GM12878 (cell line): ENCODE measurements at regions of chr11 and their contacts with region 1.

Region 1: GRCh38 chr11:73578592-73579185 is 19.2 kb downstream of the FAM168A start:
- DNase-seq: peak; percentile 37
- ATAC-seq: peak; percentile 89
- H3K4me3 ChIP-seq: no peak overlapping the region
- H3K27ac ChIP-seq: peak overlapping the region; percentile 54; the same call in 1 of the 2 replicates
- H3K4me1 ChIP-seq: peaks cover 20% of the 10 kb centered on the region
- H3K27me3 ChIP-seq: no peaks in the 10 kb centered on the region
- CTCF ChIP-seq: no peak
- EP300 ChIP-seq: no peak
- POLR2A ChIP-seq: no peak
- RAD21 ChIP-seq: no peak

Region 2: DNA sequence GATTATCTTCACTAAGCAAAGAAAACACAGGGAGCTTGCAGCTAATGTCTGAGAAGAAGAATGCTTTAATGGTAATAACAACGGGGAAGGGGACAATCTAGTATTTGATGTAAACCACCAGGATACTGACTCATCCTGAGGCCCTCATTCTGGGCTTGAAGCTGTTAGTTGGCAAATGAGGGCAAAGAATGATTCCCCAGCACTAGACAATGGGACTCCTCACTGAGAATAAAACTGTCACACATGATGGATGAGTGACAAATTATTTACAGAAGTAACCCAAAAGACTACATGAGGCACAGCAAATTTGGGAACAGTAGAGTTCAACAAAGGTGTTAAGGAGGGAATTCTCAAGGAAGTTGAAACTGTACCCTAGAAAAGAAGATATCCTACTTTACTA is 57.1 kb before region 1 on chr11:
- CTCF ChIA-PET with region 1: interaction called, 5 read pairs
- POLR2A ChIA-PET with region 1: interaction called, 6 read pairs
- RAD21 ChIA-PET with region 1: interaction called, 20 read pairs
- SMC1A ChIA-PET with region 1: interaction called, 17 read pairs
- in situ Hi-C with region 1: no loop called
- intact Hi-C with region 1: no loop called
- DNase-seq: peak; percentile 53
- ATAC-seq: peak; percentile 84
- H3K4me3 ChIP-seq: no peak overlapping the region
- H3K27ac ChIP-seq: peak overlapping the region; percentile 64
- H3K4me1 ChIP-seq: peaks cover 17% of the 10 kb centered on the region
- H3K27me3 ChIP-seq: no peaks in the 10 kb centered on the region
- CTCF ChIP-seq: no peak
- EP300 ChIP-seq: 0 out of 4 replicates have a peak, but pooled peaks of 1 of the 2 experiments have one; percentile 20
- POLR2A ChIP-seq: no peak
- RAD21 ChIP-seq: no peak

Region 3: DNA sequence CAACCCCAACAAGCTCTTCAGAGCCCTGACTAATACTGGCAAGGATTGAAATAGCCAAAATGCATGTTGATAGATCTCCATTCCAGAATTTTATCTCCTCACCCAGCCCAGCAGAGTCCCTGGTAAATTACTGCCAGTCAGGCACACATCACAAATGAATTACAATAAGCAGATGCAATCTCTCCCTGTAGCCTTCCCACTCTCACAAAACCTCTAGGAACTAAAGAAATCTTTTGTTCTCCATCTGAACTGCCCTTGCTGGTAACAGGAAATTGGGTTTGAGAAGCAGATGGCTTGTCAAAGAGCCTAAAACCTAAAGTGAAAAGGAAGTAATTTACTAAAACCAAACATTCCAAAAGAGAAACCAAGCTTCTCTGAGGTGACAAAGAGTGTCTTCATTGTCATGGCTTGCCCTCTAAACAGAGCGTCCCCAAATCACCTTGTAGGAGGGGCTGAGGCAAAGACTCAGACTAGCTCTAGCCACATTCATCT is 40.3 kb before region 1 on chr11:
- CTCF ChIA-PET with region 1: no interaction called
- POLR2A ChIA-PET with region 1: interaction called, 5 read pairs
- RAD21 ChIA-PET with region 1: interaction called, 4 read pairs
- SMC1A ChIA-PET with region 1: interaction called, 11 read pairs
- in situ Hi-C with region 1: no loop called
- intact Hi-C with region 1: no loop called
- DNase-seq: peak; percentile 53
- ATAC-seq: peak; percentile 98
- H3K4me3 ChIP-seq: 0 out of 2 replicates have a peak overlapping the region, but pooled peaks have one; percentile 0
- H3K27ac ChIP-seq: peak overlapping the region; percentile 76
- H3K4me1 ChIP-seq: peaks cover 13% of the 10 kb centered on the region
- H3K27me3 ChIP-seq: no peaks in the 10 kb centered on the region
- CTCF ChIP-seq: no peak
- EP300 ChIP-seq: no peak
- POLR2A ChIP-seq: no peak
- RAD21 ChIP-seq: no peak

Region 4: GRCh38 chr11:73566422-73566821 is 12.3 kb before region 1 on chr11:
- CTCF ChIA-PET with region 1: interaction called, 13 read pairs
- POLR2A ChIA-PET with region 1: interaction called, 4 read pairs
- RAD21 ChIA-PET with region 1: interaction called, 7 read pairs
- SMC1A ChIA-PET with region 1: interaction called, 48 read pairs
- in situ Hi-C with region 1: no loop called
- intact Hi-C with region 1: no loop called
- DNase-seq: no peak
- ATAC-seq: no peak
- H3K4me3 ChIP-seq: no peak overlapping the region
- H3K27ac ChIP-seq: no peak overlapping the region
- H3K4me1 ChIP-seq: peaks cover 5% of the 10 kb centered on the region; the same call in 1 of the 2 replicates
- H3K27me3 ChIP-seq: no peaks in the 10 kb centered on the region
- CTCF ChIP-seq: no peak
- EP300 ChIP-seq: no peak
- POLR2A ChIP-seq: no peak
- RAD21 ChIP-seq: no peak

Region 5: GRCh38 chr11:73590991-73591390 is 12.3 kb after region 1 on chr11:
- CTCF ChIA-PET with region 1: interaction called, 12 read pairs
- POLR2A ChIA-PET with region 1: interaction called, 9 read pairs
- RAD21 ChIA-PET with region 1: interaction called, 8 read pairs
- SMC1A ChIA-PET with region 1: interaction called, 24 read pairs
- in situ Hi-C with region 1: no loop called
- intact Hi-C with region 1: no loop called
- DNase-seq: no peak
- ATAC-seq: no peak
- H3K4me3 ChIP-seq: no peak overlapping the region
- H3K27ac ChIP-seq: no peak overlapping the region
- H3K4me1 ChIP-seq: no peaks in the 10 kb centered on the region
- H3K27me3 ChIP-seq: no peaks in the 10 kb centered on the region
- CTCF ChIP-seq: no peak
- EP300 ChIP-seq: no peak
- POLR2A ChIP-seq: no peak
- RAD21 ChIP-seq: no peak

Region 6: DNA sequence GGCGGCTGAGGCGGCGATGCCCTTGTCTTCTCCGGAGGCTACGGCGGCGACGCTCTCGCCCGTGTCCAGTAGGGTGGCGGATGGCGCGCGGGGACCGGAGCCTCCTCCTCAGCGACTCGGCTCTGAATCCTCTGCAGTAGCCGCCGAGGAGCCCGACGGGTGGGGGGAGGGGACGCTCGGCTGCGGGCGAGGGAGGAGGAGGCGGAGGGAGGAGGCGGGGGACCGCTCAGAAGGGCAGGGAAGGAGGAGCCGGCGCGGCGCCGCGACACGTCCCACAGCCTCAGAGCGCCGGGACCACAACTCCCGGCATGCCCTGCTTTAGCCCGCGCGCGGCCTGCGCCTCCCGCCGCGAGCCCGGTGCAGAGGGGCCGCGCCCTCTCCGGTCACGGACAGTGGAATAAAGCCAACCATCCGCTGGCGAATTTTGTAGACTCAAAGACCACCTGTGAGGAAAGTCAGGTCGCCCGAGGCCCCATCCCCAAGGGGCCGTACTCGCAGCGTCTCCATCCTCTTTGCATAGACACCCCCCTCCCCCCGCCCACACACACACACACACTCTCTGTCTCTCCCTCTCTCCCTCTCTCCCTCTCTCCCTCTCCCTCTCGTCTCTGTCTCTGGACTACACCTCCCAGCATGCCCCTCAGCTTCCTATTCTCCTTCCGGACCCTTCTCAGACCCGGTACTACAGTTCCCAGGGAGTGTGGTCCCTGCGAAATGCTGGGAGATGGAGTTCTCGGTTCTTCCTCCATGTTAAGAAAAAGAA is 19.4 kb after region 1 on chr11 and contains the start of gene FAM168A:
- CTCF ChIA-PET with region 1: interaction called, 12 read pairs
- POLR2A ChIA-PET with region 1: interaction called, 9 read pairs
- RAD21 ChIA-PET with region 1: interaction called, 5 read pairs
- SMC1A ChIA-PET with region 1: interaction called, 24 read pairs
- in situ Hi-C with region 1: no loop called
- intact Hi-C with region 1: no loop called
- DNase-seq: peak; percentile 86
- ATAC-seq: peak; percentile 96
- H3K4me3 ChIP-seq: peak within 1 kb of the TSS; percentile 77
- H3K27ac ChIP-seq: peak within 1 kb of the TSS; percentile 50
- H3K4me1 ChIP-seq: no peaks in the 10 kb centered on the region
- H3K27me3 ChIP-seq: no peaks in the 10 kb centered on the region
- CTCF ChIP-seq: peak in 2 of 3 experiments; percentile 11 to 26; a peak in 2 of 6 replicates
- EP300 ChIP-seq: no peak
- POLR2A ChIP-seq: peak; percentile 71
- RAD21 ChIP-seq: peak; percentile 8; the same call in 1 of the 2 replicates
- polyA plus RNA-seq, gene FAM168A: 1.7 to 1.8 TPM

Region 7: GRCh38 chr11:73680687-73681086 is 102.0 kb after region 1 on chr11:
- CTCF ChIA-PET with region 1: no interaction called
- POLR2A ChIA-PET with region 1: no interaction called
- RAD21 ChIA-PET with region 1: no interaction called
- SMC1A ChIA-PET with region 1: no interaction called
- in situ Hi-C with region 1: no loop called
- intact Hi-C with region 1: no loop called
- DNase-seq: no peak
- ATAC-seq: no peak
- H3K4me3 ChIP-seq: no peak overlapping the region
- H3K27ac ChIP-seq: no peak overlapping the region
- H3K4me1 ChIP-seq: no peaks in the 10 kb centered on the region
- H3K27me3 ChIP-seq: no peaks in the 10 kb centered on the region
- CTCF ChIP-seq: no peak
- EP300 ChIP-seq: no peak
- POLR2A ChIP-seq: no peak
- RAD21 ChIP-seq: no peak